ENCODE measurements at regions of chr16 and their contacts with region 1.

Region 1: DNA sequence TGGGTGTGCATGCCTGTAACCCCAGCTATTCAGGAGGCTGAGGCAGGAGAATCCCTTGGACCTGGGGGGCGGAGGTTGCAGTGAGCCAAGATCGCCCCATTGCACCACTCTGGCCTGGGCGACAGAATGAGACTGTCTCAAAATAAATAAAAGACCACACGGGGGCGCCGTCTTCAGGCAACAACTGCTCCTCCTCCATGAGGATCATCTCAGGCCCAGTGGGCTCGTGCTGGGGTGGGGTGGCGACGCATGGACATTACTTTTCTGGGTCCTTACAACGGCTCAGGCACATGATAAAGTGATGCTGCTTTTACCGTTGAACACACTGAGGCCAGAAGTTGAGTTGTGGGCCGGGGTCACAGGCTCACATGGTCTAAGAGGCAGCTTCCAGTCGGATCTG is 56.2 kb downstream of the PRMT7 start:
- DNase-seq: peak; percentile 80
- ATAC-seq: peak; percentile 35
- H3K4me3 Mint-ChIP-seq: no peak overlapping the region
- H3K27ac Mint-ChIP-seq: no peak overlapping the region
- H3K4me1 Mint-ChIP-seq: peaks cover 38% of the 10 kb centered on the region
- H3K27me3 Mint-ChIP-seq: peaks cover 22% of the 10 kb centered on the region
- CTCF ChIP-seq: peak; percentile 73

Region 2: GRCh38 chr16:68356249-68356918 is 10.6 kb before region 1 on chr16:
- CTCF ChIA-PET with region 1: interaction called, 28 read pairs
- POLR2A ChIA-PET with region 1: interaction called, 6 read pairs
- intact Hi-C with region 1: no loop called
- DNase-seq: peak; percentile 89
- ATAC-seq: peak; percentile 84
- H3K4me3 Mint-ChIP-seq: peak overlapping the region; percentile 31
- H3K27ac Mint-ChIP-seq: peak overlapping the region; percentile 53
- H3K4me1 Mint-ChIP-seq: peaks cover 34% of the 10 kb centered on the region
- H3K27me3 Mint-ChIP-seq: no peaks in the 10 kb centered on the region
- CTCF ChIP-seq: no peak

Region 3: GRCh38 chr16:68382296-68382718 is 15.3 kb after region 1 on chr16:
- CTCF ChIA-PET with region 1: interaction called, 19 read pairs
- POLR2A ChIA-PET with region 1: interaction called, 6 read pairs
- intact Hi-C with region 1: no loop called
- DNase-seq: peak; percentile 55
- ATAC-seq: peak; percentile 76
- H3K4me3 Mint-ChIP-seq: no peak overlapping the region
- H3K27ac Mint-ChIP-seq: no peak overlapping the region
- H3K4me1 Mint-ChIP-seq: peaks cover 10% of the 10 kb centered on the region
- H3K27me3 Mint-ChIP-seq: no peaks in the 10 kb centered on the region
- CTCF ChIP-seq: peak; percentile 73

Region 4: GRCh38 chr16:68499006-68499405 is 132.0 kb after region 1 on chr16:
- CTCF ChIA-PET with region 1: no interaction called
- POLR2A ChIA-PET with region 1: no interaction called
- intact Hi-C with region 1: loop called (anchors 10 kb)
- DNase-seq: no peak
- ATAC-seq: no peak
- H3K4me3 Mint-ChIP-seq: no peak overlapping the region
- H3K27ac Mint-ChIP-seq: no peak overlapping the region
- H3K4me1 Mint-ChIP-seq: no peaks in the 10 kb centered on the region
- H3K27me3 Mint-ChIP-seq: no peaks in the 10 kb centered on the region
- CTCF ChIP-seq: no peak

Region 5: GRCh38 chr16:68512183-68512582 is 145.2 kb after region 1 on chr16:
- CTCF ChIA-PET with region 1: interaction called, 23 read pairs
- POLR2A ChIA-PET with region 1: no interaction called
- intact Hi-C with region 1: loop called (anchors 10 kb)
- DNase-seq: no peak
- ATAC-seq: no peak
- H3K4me3 Mint-ChIP-seq: no peak overlapping the region
- H3K27ac Mint-ChIP-seq: no peak overlapping the region
- H3K4me1 Mint-ChIP-seq: no peaks in the 10 kb centered on the region
- H3K27me3 Mint-ChIP-seq: no peaks in the 10 kb centered on the region
- CTCF ChIP-seq: no peak

Region 6: GRCh38 chr16:68520649-68521086 is 153.6 kb after region 1 on chr16:
- CTCF ChIA-PET with region 1: interaction called, 10 read pairs
- POLR2A ChIA-PET with region 1: no interaction called
- intact Hi-C with region 1: no loop called
- DNase-seq: peak; percentile 95
- ATAC-seq: peak; percentile 99
- H3K4me3 Mint-ChIP-seq: peak overlapping the region; percentile 21
- H3K27ac Mint-ChIP-seq: no peak overlapping the region
- H3K4me1 Mint-ChIP-seq: peaks cover 8% of the 10 kb centered on the region
- H3K27me3 Mint-ChIP-seq: peaks cover 1% of the 10 kb centered on the region
- CTCF ChIP-seq: peak; percentile 99

Region 7: DNA sequence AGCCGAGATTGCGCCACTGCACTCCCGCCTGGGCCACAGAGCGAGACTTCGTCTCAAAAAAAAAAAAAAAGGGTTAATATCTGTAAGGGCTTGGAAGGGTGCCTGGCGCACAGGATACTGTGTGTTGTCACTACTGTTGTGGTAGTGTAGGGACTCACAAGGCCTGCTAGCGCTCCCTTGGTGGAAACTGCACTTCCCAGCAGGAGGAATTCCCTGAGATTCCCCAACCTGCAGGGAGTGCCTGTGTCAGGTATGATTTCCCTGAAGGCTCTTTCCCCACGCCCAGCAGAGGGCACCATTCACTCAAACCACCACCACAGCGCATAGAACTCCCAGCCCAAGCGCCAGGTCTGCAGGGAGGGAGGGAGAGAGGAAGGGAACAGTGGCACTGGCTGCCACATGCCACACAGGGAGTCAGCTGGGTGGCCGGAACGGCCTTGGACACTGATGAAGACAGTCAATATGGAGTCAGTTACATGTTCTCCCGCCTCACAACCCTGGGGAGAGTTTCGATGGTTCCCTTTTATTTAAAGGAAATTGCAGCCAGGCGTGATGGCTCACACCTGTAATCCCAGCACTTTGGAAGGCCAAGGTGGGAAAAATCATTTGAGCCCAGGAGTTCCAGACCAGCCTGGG is 337.3 kb after region 1 on chr16:
- CTCF ChIA-PET with region 1: no interaction called
- POLR2A ChIA-PET with region 1: no interaction called
- intact Hi-C with region 1: no loop called
- DNase-seq: peak; percentile 77
- ATAC-seq: peak; percentile 75
- H3K4me3 Mint-ChIP-seq: no peak overlapping the region
- H3K27ac Mint-ChIP-seq: no peak overlapping the region
- H3K4me1 Mint-ChIP-seq: no peaks in the 10 kb centered on the region
- H3K27me3 Mint-ChIP-seq: no peaks in the 10 kb centered on the region
- CTCF ChIP-seq: peak; percentile 90